ENCODE measurements at regions of chr2 and their contacts with region 1.

Region 1: GRCh38 chr2:73851274-73851673 is 22.5 kb downstream of the STAMBP start:
- DNase-seq: no peak
- ATAC-seq: no peak

Region 2: GRCh38 chr2:73904952-73905351 is 53.7 kb after region 1 on chr2:
- intact Hi-C with region 1: loop called (anchors 2 kb)
- DNase-seq: no peak
- ATAC-seq: no peak

Measured in sciatic nerve (tissue), 2 donors.